Left ventricle myocardium inferior (tissue), 1 donor: ENCODE measurements at regions of chr3 and their contacts with region 1.

Region 1: GRCh38 chr3:54374214-54374855 is 252.0 kb downstream of the CACNA2D3 start:
- DNase-seq: no peak
- H3K4me3 ChIP-seq: no peak overlapping the region
- H3K27ac ChIP-seq: no peak overlapping the region
- H3K4me1 ChIP-seq: peaks cover 18% of the 10 kb centered on the region
- H3K27me3 ChIP-seq: no peaks in the 10 kb centered on the region
- CTCF ChIP-seq: peak; percentile 63

Region 2: DNA sequence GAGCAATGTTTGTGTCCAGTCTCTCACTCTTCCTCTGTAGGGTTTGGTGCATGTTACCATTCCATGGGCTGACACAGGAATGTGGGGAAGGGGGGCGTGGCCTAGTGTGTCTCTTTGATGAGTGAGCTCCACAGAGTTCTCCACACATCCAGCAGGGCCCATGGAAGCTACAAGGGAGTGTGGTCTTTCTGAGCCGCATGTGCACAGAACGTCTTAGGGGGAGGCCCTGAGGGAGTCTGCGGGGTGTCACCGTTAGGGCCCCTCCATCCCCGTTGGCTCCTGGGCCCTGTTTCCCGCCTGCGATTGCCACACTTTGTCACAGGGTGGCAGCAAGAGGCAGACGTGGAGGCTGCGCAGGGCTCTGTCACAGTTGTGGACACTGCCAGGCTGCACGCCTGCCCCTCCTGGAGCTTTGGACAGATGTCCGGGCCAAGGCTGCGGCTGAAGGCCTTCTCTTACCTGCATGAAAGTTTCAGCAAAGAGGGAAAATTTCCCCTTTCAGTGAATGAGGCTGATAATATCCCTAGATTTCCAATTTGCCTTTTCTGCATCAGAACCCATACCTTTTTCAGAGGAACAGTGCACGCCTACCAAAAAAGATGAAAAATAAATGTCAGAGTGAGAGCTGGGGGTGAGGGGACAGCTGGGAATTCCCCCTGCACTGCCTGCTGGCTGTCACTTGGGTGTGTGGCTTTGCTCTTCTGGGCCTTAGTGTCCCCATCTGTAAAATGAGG is 227.7 kb before region 1 on chr3:
- intact Hi-C with region 1: loop called (anchors 10 kb)
- DNase-seq: peak; percentile 52
- H3K4me3 ChIP-seq: no peak overlapping the region
- H3K27ac ChIP-seq: no peak overlapping the region
- H3K4me1 ChIP-seq: peaks cover 18% of the 10 kb centered on the region
- H3K27me3 ChIP-seq: no peaks in the 10 kb centered on the region
- CTCF ChIP-seq: peak; percentile 82

Region 3: DNA sequence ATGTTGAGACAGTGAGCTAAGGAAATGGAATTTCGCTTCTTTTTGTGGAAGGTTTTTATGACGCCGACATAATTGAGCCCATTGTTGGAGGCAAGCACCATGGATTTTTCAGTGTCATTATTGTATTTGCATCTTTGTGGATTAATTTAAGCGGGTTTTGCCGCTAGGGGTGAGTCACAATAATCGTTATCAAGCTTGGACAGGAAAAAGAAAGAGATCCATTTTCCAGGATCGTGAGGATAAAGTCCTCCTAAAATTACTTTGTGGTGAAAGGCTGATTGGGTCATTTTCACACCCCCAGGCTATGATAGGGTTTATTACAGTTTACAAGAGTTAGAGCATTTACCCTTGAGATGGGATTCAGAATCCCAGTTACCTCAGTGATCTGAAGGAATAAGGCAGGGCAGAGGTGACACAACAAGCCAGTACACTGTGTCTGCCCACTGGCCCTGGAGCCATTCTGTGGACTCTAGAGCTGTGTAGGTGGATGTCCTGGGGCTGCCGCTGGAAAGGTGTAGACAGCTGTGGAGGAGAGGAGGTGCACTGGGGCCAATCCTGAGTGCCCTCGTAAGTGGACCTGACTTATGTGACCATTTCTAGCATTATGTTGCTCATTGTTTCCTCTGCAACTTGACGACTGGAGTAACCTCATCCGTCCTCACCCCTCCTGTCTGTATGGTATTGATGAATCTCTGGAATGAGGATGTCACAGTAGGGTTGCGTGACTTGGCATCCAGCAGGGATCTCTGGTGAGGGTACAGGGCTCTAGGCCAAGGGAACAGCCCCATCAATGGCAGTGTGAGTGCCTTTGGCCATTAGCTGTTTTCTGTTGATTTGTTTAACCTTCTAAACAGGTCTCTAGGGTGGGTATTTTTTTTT is 183.4 kb after region 1 on chr3:
- intact Hi-C with region 1: no loop called
- DNase-seq: no peak
- H3K4me3 ChIP-seq: no peak overlapping the region
- H3K27ac ChIP-seq: no peak overlapping the region
- H3K4me1 ChIP-seq: no peaks in the 10 kb centered on the region
- H3K27me3 ChIP-seq: no peaks in the 10 kb centered on the region
- CTCF ChIP-seq: no peak